BJ (cell line): ENCODE measurements at regions of chr13 and their contacts with region 1.

Region 1: DNA sequence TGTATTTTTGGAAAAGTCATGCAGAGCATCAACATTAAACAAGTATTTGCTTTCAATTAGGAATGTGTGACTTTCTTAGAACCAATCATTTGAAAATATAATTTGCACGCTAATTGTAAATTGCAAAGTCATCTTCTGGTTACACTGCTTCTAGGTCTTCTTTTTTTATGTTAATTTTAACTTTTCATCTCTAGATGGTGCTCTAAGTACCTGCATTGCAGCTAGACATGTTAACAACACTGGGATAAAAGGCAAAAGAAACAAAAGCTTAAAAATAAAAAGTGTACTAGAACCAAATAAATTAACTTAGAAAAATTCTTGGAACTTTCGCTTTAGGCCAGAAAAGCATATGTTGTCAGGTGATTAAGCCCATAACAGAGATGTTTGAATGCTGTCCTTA is 2758.2 kb downstream of the PCDH9 start:
- DNase-seq: no peak
- H3K4me3 ChIP-seq: no peak overlapping the region
- H3K27me3 ChIP-seq: no peaks in the 10 kb centered on the region
- CTCF ChIP-seq: peak; percentile 49

Region 2: GRCh38 chr13:64529874-64530485 is 58.1 kb after region 1 on chr13:
- CTCF ChIA-PET with region 1: no interaction called
- POLR2A ChIA-PET with region 1: no interaction called
- DNase-seq: no peak
- H3K4me3 ChIP-seq: no peak overlapping the region
- H3K27me3 ChIP-seq: no peaks in the 10 kb centered on the region
- CTCF ChIP-seq: peak; percentile 65

Region 3: DNA sequence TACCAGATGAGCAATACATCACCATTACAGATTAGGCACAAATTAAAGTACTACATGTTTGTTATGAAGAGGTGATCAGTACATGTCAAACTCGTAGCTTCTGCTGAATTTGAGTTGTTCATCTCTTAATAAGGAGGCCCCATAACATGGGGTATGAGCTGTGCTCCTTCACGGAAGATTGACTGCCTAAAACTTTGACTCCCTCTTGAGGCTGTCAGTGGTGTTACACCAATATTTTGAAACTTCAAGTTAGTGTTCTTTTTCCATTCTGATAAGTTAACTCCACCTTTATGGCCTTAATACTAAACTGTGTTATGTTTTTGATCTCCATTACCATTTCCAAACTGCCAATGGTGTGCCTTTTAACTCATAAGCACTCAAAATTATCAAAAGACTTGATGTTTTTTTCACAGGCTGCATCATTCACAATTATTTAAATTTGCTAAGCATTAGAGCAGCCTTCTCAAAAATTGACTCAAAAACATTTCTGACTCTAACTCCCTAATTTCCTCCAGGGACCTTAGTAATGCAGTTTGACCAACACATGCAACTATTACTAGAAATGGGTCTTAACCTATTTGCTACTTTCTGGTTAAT is 1166.8 kb after region 1 on chr13:
- CTCF ChIA-PET with region 1: interaction called, 10 read pairs
- POLR2A ChIA-PET with region 1: no interaction called
- DNase-seq: no peak
- H3K4me3 ChIP-seq: no peak overlapping the region
- H3K27me3 ChIP-seq: no peaks in the 10 kb centered on the region
- CTCF ChIP-seq: peak; percentile 73